Esophagus squamous epithelium (tissue), 5 donors: ENCODE measurements at regions of chr2 and their contacts with region 1.

Region 1: GRCh38 chr2:201860636-201861066 is 54.3 kb downstream of the CDK15 start:
- DNase-seq: no peak
- H3K4me3 ChIP-seq: no peak overlapping the region
- H3K27ac ChIP-seq: peak overlapping the region in 1 of 4 donors; percentile 3
- H3K4me1 ChIP-seq: peaks cover 0 to 30% (median 5%) of the 10 kb centered on the region in 3 donors
- H3K27me3 ChIP-seq: peaks cover 0 to 24% (median 0%) of the 10 kb centered on the region in 4 donors
- CTCF ChIP-seq: peak; percentile 66 to 80 (median 76)
- POLR2A ChIP-seq: no peak

Region 2: GRCh38 chr2:202178342-202178958 is 317.8 kb after region 1 on chr2:
- intact Hi-C with region 1: loop called (anchors 5 kb)
- DNase-seq: no peak
- H3K4me3 ChIP-seq: no peak overlapping the region
- H3K27ac ChIP-seq: no peak overlapping the region
- H3K4me1 ChIP-seq: no peaks in the 10 kb centered on the region
- H3K27me3 ChIP-seq: no peaks in the 10 kb centered on the region
- CTCF ChIP-seq: peak; percentile 75 to 86 (median 80)
- POLR2A ChIP-seq: no peak